Left ventricle myocardium superior (tissue), 1 donor: ENCODE measurements at regions of chr20 and their contacts with region 1.

Region 1: DNA sequence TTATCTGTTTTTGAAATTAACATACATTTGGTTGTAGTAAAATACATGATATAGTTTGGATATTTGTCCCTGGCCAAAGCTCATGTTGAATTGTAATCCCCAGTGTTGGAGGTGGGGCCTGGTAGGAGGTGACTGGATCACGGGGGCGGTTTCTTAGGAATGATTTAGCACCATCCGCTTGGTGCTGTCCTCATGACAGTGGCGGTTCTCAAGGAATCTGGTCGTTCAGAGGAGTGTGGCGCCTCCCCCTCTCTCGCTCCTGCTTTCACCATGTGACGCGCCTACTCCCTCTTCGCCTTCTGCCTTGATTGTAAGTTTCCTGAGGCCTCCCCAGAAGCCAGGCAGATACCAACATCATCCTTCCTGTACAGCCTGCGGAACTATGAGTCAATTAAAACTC is 29.0 kb downstream of the CTCFL start:
- DNase-seq: no peak
- ATAC-seq: no peak

Region 2: GRCh38 chr20:57383447-57384347 is 112.3 kb before region 1 on chr20:
- intact Hi-C with region 1: loop called (anchors 2 kb)
- DNase-seq: no peak
- ATAC-seq: no peak